Activated naive CD4-positive, alpha-beta T cell treated with anti-CD3 and anti-CD28 coated beads, Interleukin-2, amount 10 ng/mL, durations not matched to agents 7 days and 5 days (primary cell): ENCODE measurements at regions of chr1 and their contacts with region 1.

Region 1: GRCh38 chr1:116915182-116915661 is 5.5 kb downstream of the PTGFRN start:
- DNase-seq: peak; percentile 31
- H3K4me3 Mint-ChIP-seq: peak overlapping the region; percentile 34
- H3K27ac Mint-ChIP-seq: no peak overlapping the region
- H3K4me1 Mint-ChIP-seq: no peaks in the 10 kb centered on the region
- H3K27me3 Mint-ChIP-seq: no peaks in the 10 kb centered on the region

Region 2: GRCh38 chr1:116934586-116935207 is 19.5 kb after region 1 on chr1:
- CTCF ChIA-PET with region 1: interaction called, 20 read pairs
- DNase-seq: no peak
- H3K4me3 Mint-ChIP-seq: no peak overlapping the region
- H3K27ac Mint-ChIP-seq: no peak overlapping the region
- H3K4me1 Mint-ChIP-seq: peaks cover 25% of the 10 kb centered on the region
- H3K27me3 Mint-ChIP-seq: peaks cover 7% of the 10 kb centered on the region

Region 3: DNA sequence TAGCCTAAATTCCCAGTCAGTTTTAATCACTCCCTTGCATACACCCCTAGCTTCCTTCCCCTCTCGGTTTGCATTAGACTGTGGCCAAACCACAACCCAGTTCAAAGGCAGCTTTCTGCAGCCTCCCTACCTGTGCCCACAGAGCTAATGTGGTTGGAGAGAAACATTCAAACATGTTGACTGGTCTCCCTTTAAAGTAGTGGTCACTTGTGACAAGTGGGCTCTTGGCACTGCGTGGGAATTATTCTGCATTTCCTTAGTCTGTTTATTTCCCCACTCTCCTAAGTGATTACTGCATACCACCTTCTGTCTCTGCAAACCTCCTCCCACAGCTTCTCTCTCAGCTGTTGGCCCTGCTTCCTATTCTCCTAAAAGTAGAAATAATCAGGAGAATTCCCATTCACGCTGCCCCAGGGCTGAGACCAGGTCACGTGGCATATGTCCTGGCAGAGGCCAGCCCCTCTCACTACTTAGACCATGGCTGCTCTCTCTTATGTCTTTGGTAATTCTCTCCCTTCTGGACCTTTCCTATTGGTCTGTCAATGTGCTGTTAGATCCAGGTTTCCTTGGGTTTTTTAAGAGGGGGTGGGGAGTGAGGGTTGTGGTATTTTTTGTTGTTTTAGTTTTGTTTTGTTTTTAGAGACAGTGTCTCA is 47.9 kb after region 1 on chr1:
- CTCF ChIA-PET with region 1: no interaction called
- DNase-seq: peak; percentile 41
- H3K4me3 Mint-ChIP-seq: no peak overlapping the region
- H3K27ac Mint-ChIP-seq: no peak overlapping the region
- H3K4me1 Mint-ChIP-seq: no peaks in the 10 kb centered on the region
- H3K27me3 Mint-ChIP-seq: no peaks in the 10 kb centered on the region

Region 4: DNA sequence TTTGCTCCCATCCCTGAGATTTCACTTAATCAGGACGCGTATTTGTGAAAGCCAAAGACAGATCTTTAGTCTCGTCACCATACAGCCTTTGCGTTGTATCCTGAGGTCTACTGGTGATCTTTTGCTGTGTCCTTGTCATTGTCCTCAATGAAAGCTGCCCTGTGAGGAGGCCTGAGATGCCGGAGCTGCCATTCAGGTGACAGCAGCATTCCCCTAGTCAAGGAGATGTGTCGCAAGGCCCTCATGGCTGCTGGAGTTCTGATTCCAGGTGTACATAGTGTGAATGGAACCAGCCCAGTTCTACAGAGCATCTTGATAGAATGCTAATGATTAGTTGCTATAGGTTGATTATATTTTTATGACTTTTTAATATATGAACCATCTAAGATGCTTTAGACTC is 169.0 kb after region 1 on chr1:
- CTCF ChIA-PET with region 1: no interaction called
- DNase-seq: no peak
- H3K4me3 Mint-ChIP-seq: no peak overlapping the region
- H3K27ac Mint-ChIP-seq: no peak overlapping the region
- H3K4me1 Mint-ChIP-seq: no peaks in the 10 kb centered on the region
- H3K27me3 Mint-ChIP-seq: no peaks in the 10 kb centered on the region